GM12878 (cell line): ENCODE measurements at regions of chr13 and their contacts with region 1.

Region 1: GRCh38 chr13:112397108-112397507 is 21.0 kb downstream of the SPACA7 start:
- DNase-seq: no peak
- ATAC-seq: no peak
- H3K4me3 ChIP-seq: no peak overlapping the region
- H3K27ac ChIP-seq: no peak overlapping the region
- H3K4me1 ChIP-seq: no peaks in the 10 kb centered on the region
- H3K27me3 ChIP-seq: no peaks in the 10 kb centered on the region
- CTCF ChIP-seq: no peak
- EP300 ChIP-seq: no peak
- POLR2A ChIP-seq: no peak
- RAD21 ChIP-seq: no peak

Region 2: DNA sequence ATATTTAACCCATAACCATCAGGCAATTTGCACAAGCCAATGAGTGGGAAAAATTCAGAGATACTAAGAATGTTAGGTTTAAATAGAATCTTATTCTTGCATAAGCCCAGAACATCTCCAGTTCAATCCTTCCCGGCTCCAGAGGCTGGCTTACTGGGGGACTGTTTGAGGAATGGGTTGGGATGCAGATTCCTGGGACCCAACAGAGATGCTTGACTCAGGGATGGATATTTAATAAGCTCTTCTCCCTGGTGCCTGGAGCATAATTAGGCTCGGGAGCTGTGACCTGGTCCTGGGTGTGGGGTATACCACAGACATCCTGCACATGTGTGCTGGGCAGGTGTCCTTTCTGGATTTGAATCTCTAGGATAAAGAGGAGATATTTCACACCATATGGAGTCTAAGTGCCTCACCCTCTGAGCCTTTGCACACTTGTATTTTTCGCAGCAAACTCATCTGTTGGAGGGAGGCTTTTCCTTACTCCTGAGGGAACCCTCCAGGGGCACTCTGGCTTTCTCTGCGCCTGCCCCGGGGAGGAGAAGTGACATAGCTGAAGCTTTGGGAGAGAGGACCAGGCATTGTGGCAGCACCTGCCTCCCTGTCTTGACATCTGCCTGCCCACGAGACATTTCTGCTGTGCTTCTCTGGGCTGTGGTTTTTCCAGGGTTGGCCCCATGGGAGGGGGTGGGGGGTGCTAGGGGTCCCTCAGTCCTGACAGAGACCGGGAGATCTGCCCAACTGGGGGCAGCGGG is 1446.1 kb before region 1 on chr13:
- CTCF ChIA-PET with region 1: no interaction called
- POLR2A ChIA-PET with region 1: no interaction called
- RAD21 ChIA-PET with region 1: no interaction called
- SMC1A ChIA-PET with region 1: no interaction called
- in situ Hi-C with region 1: loop called (anchors 5 kb)
- intact Hi-C with region 1: no loop called
- DNase-seq: no peak
- ATAC-seq: no peak
- H3K4me3 ChIP-seq: no peak overlapping the region
- H3K27ac ChIP-seq: no peak overlapping the region
- H3K4me1 ChIP-seq: no peaks in the 10 kb centered on the region
- H3K27me3 ChIP-seq: no peaks in the 10 kb centered on the region
- CTCF ChIP-seq: no peak
- EP300 ChIP-seq: no peak
- POLR2A ChIP-seq: no peak
- RAD21 ChIP-seq: no peak

Region 3: GRCh38 chr13:112341976-112342735 is 55.0 kb before region 1 on chr13:
- CTCF ChIA-PET with region 1: no interaction called
- POLR2A ChIA-PET with region 1: no interaction called
- RAD21 ChIA-PET with region 1: no interaction called
- SMC1A ChIA-PET with region 1: no interaction called
- in situ Hi-C with region 1: no loop called
- intact Hi-C with region 1: no loop called
- DNase-seq: no peak
- ATAC-seq: no peak
- H3K4me3 ChIP-seq: no peak overlapping the region
- H3K27ac ChIP-seq: no peak overlapping the region
- H3K4me1 ChIP-seq: no peaks in the 10 kb centered on the region
- H3K27me3 ChIP-seq: 0 out of 4 replicates have a peak, but pooled peaks cover 0 to 1% of the 10 kb centered on the region in 2 experiments
- CTCF ChIP-seq: no peak
- EP300 ChIP-seq: no peak
- POLR2A ChIP-seq: no peak
- RAD21 ChIP-seq: no peak